ENCODE measurements at regions of chr10 and their contacts with region 1.

Region 1: GRCh38 chr10:17430647-17431355 is 23.6 kb downstream of the ST8SIA6 start:
- DNase-seq: peak in 1 of 2 experiments; percentile 83
- H3K4me3 ChIP-seq: no peak overlapping the region
- H3K27ac ChIP-seq: no peak overlapping the region
- H3K4me1 ChIP-seq: peaks cover 0 to 2% (median 0%) of the 10 kb centered on the region in 4 experiments; a peak in 1 of 7 replicates
- H3K27me3 ChIP-seq: no peaks in the 10 kb centered on the region
- CTCF ChIP-seq: peak; percentile 69 to 87 (median 77)
- EP300 ChIP-seq: no peak
- POLR2A ChIP-seq: no peak
- RAD21 ChIP-seq: peak; percentile 76 to 77

Region 2: DNA sequence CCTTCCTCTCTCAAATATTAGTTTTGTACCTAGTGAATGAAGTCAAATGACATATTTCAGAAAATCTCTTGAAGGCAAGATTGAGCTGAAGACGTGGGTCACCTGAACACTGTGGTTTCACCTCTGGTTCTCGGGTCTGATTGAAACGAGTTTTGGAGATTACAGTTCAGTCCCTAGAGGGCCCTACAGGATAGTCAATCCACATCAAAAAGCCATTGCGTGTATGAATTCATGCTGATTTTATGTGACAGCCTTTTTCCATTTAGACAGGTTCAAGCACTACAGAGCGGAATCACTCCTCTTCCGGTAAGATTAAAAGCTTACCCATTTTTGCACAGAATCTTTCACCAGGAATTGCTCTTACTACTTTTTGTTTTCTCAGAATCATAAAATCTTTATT is 140.6 kb before region 1 on chr10:
- CTCF ChIA-PET with region 1: interaction called, 10 read pairs
- POLR2A ChIA-PET with region 1: no interaction called
- DNase-seq: no peak
- H3K4me3 ChIP-seq: no peak overlapping the region
- H3K27ac ChIP-seq: no peak overlapping the region
- H3K4me1 ChIP-seq: no peaks in the 10 kb centered on the region
- H3K27me3 ChIP-seq: no peaks in the 10 kb centered on the region
- CTCF ChIP-seq: peak in 2 of 3 experiments; percentile 47 to 55; a peak in 2 of 4 replicates
- EP300 ChIP-seq: no peak
- POLR2A ChIP-seq: no peak
- RAD21 ChIP-seq: peak; percentile 78 to 82

Region 3: GRCh38 chr10:17443707-17444387 is 13.0 kb after region 1 on chr10:
- CTCF ChIA-PET with region 1: interaction called, 36 read pairs
- POLR2A ChIA-PET with region 1: no interaction called
- DNase-seq: no peak
- H3K4me3 ChIP-seq: no peak overlapping the region
- H3K27ac ChIP-seq: no peak overlapping the region
- H3K4me1 ChIP-seq: peaks cover 0 to 2% (median 0%) of the 10 kb centered on the region in 4 experiments; a peak in 1 of 7 replicates
- H3K27me3 ChIP-seq: no peaks in the 10 kb centered on the region
- CTCF ChIP-seq: no peak
- EP300 ChIP-seq: no peak
- POLR2A ChIP-seq: no peak
- RAD21 ChIP-seq: no peak

Region 4: GRCh38 chr10:17504547-17505245 is 73.9 kb after region 1 on chr10:
- CTCF ChIA-PET with region 1: no interaction called
- POLR2A ChIA-PET with region 1: no interaction called
- DNase-seq: no peak
- H3K4me3 ChIP-seq: no peak overlapping the region
- H3K27ac ChIP-seq: no peak overlapping the region
- H3K4me1 ChIP-seq: no peaks in the 10 kb centered on the region
- H3K27me3 ChIP-seq: peaks cover 0 to 1% (median 0%) of the 10 kb centered on the region in 4 experiments; a peak in 1 of 7 replicates
- CTCF ChIP-seq: no peak
- EP300 ChIP-seq: no peak
- POLR2A ChIP-seq: no peak
- RAD21 ChIP-seq: no peak

Region 5: DNA sequence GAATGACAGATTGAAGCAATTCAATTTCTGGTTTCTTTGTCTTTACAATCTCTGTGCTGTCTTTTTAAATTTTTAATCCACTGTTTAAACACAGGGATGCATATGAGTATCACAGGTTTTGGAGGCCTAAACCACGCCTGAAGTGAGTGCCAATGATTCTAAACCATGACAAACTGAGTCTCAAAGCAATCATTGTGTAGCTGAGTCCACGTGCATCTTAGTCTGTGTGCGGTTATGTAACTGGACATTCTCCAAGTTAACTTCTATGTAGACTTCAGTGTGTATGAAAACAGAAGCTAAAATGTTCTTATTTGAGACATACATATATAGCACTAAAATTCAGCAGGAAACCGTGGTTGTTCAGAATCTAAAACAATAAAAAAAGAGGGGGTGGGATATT is 102.9 kb after region 1 on chr10:
- CTCF ChIA-PET with region 1: no interaction called
- POLR2A ChIA-PET with region 1: no interaction called
- DNase-seq: no peak
- H3K4me3 ChIP-seq: no peak overlapping the region
- H3K27ac ChIP-seq: no peak overlapping the region
- H3K4me1 ChIP-seq: no peaks in the 10 kb centered on the region
- H3K27me3 ChIP-seq: no peaks in the 10 kb centered on the region
- CTCF ChIP-seq: no peak
- EP300 ChIP-seq: no peak
- POLR2A ChIP-seq: no peak
- RAD21 ChIP-seq: no peak